ENCODE measurements at regions of chr19 and their contacts with region 1.

Region 1: DNA sequence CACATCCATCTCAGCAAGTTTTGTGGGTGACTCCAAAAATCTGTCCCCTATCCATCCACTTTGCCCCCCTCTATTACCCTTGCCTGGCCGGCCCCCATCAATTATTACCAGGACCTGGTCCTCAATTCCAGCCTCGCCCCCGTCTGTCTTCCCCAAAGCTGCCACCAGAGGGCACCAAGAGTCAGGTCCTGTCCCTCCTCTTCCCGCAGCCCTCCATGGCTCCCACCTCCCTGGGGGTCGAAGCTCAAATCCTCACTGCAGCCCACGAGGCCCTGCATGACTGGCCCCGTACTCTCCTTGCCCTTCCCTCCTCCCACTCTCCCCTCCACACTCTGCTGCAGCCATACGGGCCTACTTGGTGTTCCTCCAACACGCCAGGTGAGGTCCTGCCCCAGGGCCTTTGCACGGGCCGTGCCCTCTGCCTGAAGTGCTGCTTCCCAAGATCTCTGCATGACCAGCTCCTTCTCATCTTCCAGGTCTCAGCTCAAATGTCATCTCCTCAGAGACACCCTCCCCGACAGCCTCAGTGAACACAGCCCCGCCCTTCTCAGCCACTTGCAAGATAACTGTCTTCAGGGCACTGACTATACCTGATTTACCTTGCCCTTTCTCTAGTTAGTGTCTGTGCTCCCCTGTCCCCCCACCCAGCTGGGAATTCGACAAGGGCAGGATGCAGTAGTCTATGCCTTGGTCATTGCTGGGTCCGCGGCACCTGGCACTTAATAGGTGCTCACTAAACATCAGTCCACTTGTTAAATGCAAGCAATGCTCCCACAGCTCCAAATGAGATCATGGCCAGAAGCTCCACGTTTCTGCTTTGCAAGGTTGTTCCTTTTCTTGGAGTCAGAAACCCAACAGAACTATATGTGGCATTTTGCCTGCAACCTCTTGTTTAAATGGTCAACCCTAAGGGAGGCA is 16.8 kb upstream of the SEMA6B start:
- DNase-seq: peak; percentile 85
- H3K4me3 ChIP-seq: peak overlapping the region in 1 of 2 experiments; percentile 39; a peak in 1 of 4 replicates
- H3K27ac ChIP-seq: peak overlapping the region in 1 of 2 experiments; percentile 49; a peak in 1 of 4 replicates
- H3K4me1 ChIP-seq: no peaks in the 10 kb centered on the region; a peak in 1 of 4 replicates
- H3K27me3 ChIP-seq: peaks cover 14% of the 10 kb centered on the region; the same call in 1 of the 2 replicates
- CTCF ChIP-seq: peak; percentile 84
- EP300 ChIP-seq: no peak
- RAD21 ChIP-seq: peak; percentile 64

Region 2: DNA sequence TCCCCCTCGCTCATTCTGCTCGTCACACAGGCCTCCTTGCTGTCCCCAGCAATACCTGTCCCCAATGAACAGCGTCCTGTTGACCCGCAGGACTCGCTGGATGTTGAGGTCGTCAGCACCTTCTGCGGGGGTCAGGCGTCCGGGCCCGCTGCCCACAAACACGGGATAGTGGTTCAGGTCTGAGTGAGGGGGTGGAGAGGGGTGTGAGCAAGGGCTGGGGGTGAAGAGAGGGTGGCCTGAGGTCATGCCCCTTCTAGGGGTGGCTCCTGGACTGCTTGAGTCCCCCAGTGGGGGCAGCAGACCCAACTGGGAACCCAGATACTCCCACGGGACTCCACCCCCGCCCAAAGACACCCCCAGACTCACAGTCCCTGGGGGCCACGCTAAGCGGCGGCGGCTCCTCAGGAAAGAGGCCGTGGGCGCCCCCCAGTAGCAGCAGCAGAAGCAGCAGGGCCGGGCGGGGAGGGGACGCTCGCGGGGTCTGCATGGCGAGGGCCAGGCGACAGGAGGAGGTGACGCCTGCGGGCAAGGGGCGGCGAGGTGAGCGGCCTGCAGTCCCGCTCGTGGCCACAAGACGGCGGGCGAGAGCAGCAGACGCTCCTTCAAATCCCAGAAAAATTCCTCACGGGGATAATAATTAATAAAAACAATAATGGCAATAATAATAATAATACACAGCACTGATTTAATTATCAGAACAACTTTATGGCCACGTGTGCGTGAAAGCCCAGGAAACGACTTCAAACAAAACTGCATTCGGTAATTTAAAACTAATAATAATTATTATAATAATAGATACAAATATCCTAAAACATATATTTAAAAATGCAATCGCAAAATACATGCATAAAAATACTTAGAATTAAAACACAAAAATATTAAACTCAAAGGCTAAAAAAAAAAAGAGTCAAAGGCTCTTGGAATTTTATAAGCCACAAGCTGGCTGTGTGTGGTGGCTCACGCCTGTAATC is 18.0 kb before region 1 on chr19:
- CTCF ChIA-PET with region 1: interaction called, 24 read pairs
- POLR2A ChIA-PET with region 1: no interaction called
- DNase-seq: peak; percentile 83
- H3K4me3 ChIP-seq: peak overlapping the region in 1 of 2 experiments; percentile 43; a peak in 1 of 4 replicates
- H3K27ac ChIP-seq: no peak overlapping the region
- H3K4me1 ChIP-seq: peaks cover 0 to 8% of the 10 kb centered on the region in 2 experiments; a peak in 1 of 4 replicates
- H3K27me3 ChIP-seq: no peaks in the 10 kb centered on the region
- CTCF ChIP-seq: peak; percentile 88
- EP300 ChIP-seq: no peak
- RAD21 ChIP-seq: peak; percentile 57

Region 3: GRCh38 chr19:4589579-4590410 is 13.5 kb after region 1 on chr19:
- CTCF ChIA-PET with region 1: interaction called, 27 read pairs
- POLR2A ChIA-PET with region 1: no interaction called
- DNase-seq: peak; percentile 74
- H3K4me3 ChIP-seq: no peak overlapping the region
- H3K27ac ChIP-seq: no peak overlapping the region
- H3K4me1 ChIP-seq: peaks cover 0 to 2% of the 10 kb centered on the region in 2 experiments; a peak in 1 of 4 replicates
- H3K27me3 ChIP-seq: peaks cover 23% of the 10 kb centered on the region; the same call in 1 of the 2 replicates
- CTCF ChIP-seq: peak; percentile 50
- EP300 ChIP-seq: no peak
- RAD21 ChIP-seq: peak; percentile 43

Region 4: DNA sequence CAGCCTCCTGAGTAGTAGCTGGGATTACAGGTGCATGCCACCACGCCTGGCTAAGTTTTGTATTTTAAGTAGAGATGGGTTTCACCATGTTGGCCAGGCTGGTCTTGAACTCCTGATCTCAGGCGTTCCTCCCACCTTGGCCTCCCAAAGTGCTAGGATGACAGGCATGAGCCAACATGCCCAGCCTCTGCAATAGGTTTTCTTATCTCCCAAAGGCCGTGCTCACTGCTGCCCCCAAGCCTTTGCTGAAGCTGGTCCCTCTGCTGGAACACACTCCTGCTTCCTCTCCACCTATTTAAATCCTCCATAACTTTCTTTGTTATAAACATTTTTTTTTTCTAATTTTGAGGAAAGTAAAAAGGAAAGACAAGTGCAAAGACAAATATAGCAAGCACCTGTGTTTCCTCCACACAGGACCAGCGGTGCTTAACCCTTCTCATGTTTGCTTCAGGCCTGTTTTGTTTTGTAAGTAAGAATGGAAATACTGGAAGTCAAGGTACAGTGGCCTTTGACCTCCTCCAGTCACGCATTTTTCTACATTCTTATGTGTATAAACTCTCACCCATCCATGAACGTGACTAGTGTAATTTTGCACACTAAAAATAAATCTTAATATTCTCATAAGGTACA is 48.6 kb after region 1 on chr19:
- CTCF ChIA-PET with region 1: interaction called, 16 read pairs
- POLR2A ChIA-PET with region 1: no interaction called
- DNase-seq: no peak
- H3K4me3 ChIP-seq: no peak overlapping the region
- H3K27ac ChIP-seq: no peak overlapping the region
- H3K4me1 ChIP-seq: peaks cover 0 to 4% of the 10 kb centered on the region in 2 experiments; a peak in 1 of 4 replicates
- H3K27me3 ChIP-seq: peaks cover 5% of the 10 kb centered on the region
- CTCF ChIP-seq: peak; percentile 45
- EP300 ChIP-seq: no peak
- RAD21 ChIP-seq: no peak

Measured in SK-N-SH (cell line).